ENCODE measurements at regions of chr2 and their contacts with region 1.

Region 1: GRCh38 chr2:156435715-156436496 is at the start of gene GPD2:
- DNase-seq: peak; percentile 92 to 94
- ATAC-seq: peak; percentile 97 to 100 (median 99)
- H3K4me3 ChIP-seq: peak within 1 kb of the TSS; percentile 45 to 92 (median 72)
- H3K27ac ChIP-seq: peak within 1 kb of the TSS; percentile 92 to 100 (median 99)
- H3K4me1 ChIP-seq: peaks cover 5 to 47% (median 24%) of the 10 kb centered on the region in 9 donors
- H3K27me3 ChIP-seq: no peaks in the 10 kb centered on the region
- CTCF ChIP-seq: peak in 5 of 9 donors; percentile 11 to 47 (median 32)
- total RNA-seq, gene GPD2: 10.7 to 20.9 (median 15.5) TPM

Region 2: GRCh38 chr2:156400706-156401678 is 34.9 kb before region 1 on chr2:
- intact Hi-C with region 1: loop called in 5 of 10 experiments (anchors 2 to 5 kb)
- DNase-seq: peak; percentile 59 to 79
- ATAC-seq: peak; percentile 90 to 97 (median 92)
- H3K4me3 ChIP-seq: peak overlapping the region; percentile 51 to 85 (median 75)
- H3K27ac ChIP-seq: peak overlapping the region; percentile 52 to 97 (median 89)
- H3K4me1 ChIP-seq: peaks cover 0 to 26% (median 7%) of the 10 kb centered on the region in 9 donors
- H3K27me3 ChIP-seq: peaks cover 0 to 3% (median 0%) of the 10 kb centered on the region in 7 donors
- CTCF ChIP-seq: no peak

Region 3: GRCh38 chr2:156565066-156565710 is 129.3 kb after region 1 on chr2:
- intact Hi-C with region 1: loop called in 1 of 10 experiments (anchors 10 kb)
- DNase-seq: no peak
- ATAC-seq: no peak
- H3K4me3 ChIP-seq: no peak overlapping the region
- H3K27ac ChIP-seq: no peak overlapping the region
- H3K4me1 ChIP-seq: peaks cover 0 to 18% (median 6%) of the 10 kb centered on the region in 9 donors
- H3K27me3 ChIP-seq: no peaks in the 10 kb centered on the region
- CTCF ChIP-seq: no peak